A549 (cell line): ENCODE measurements at regions of chr3 and their contacts with region 1.

Region 1: GRCh38 chr3:138915503-138916498 is 31.1 kb downstream of the FOXL2 start:
- DNase-seq: peak; percentile 79 to 82
- ATAC-seq: peak; percentile 94 to 96
- H3K4me3 ChIP-seq: peak overlapping the region; percentile 76
- H3K27ac ChIP-seq: peak overlapping the region; percentile 95 to 97
- H3K4me1 ChIP-seq: peaks cover 5% of the 10 kb centered on the region; the same call in 1 of the 3 replicates
- CTCF ChIP-seq: peak; percentile 70
- EP300 ChIP-seq: no peak
- POLR2A ChIP-seq: peak; percentile 18; the same call in 1 of the 2 replicates
- RAD21 ChIP-seq: peak; percentile 69 to 77

Region 2: GRCh38 chr3:138479438-138479863 is 436.4 kb before region 1 on chr3:
- CTCF ChIA-PET with region 1: interaction called, 13 read pairs
- POLR2A ChIA-PET with region 1: no interaction called
- DNase-seq: peak; percentile 44 to 45
- ATAC-seq: peak; percentile 64 to 81; a peak in 5 of 6 replicates
- H3K4me3 ChIP-seq: no peak overlapping the region
- H3K27ac ChIP-seq: no peak overlapping the region
- H3K4me1 ChIP-seq: no peaks in the 10 kb centered on the region
- CTCF ChIP-seq: peak; percentile 73
- EP300 ChIP-seq: no peak
- POLR2A ChIP-seq: no peak
- RAD21 ChIP-seq: peak; percentile 76

Region 3: DNA sequence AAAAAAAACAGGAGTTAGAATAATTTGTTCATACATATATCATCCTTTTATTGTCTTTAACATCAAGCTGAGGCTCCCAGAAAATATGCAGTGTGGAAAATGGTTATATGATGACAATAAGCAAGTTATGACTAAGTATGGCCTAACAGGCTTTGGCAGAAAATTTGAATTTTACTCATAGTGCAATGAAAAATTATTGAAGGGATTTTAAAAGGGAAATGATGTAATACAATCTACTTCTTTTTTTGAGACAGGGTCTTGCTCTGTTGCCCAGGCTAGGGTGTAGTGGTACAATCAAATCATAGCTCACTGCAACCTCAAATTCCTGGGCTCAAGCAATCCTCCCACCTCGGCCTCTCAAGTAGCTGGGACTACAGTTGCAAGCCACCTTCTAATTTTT is 228.6 kb before region 1 on chr3:
- CTCF ChIA-PET with region 1: interaction called, 143 read pairs
- POLR2A ChIA-PET with region 1: interaction called, 4 read pairs
- DNase-seq: no peak
- ATAC-seq: no peak
- H3K4me3 ChIP-seq: no peak overlapping the region
- H3K27ac ChIP-seq: peak overlapping the region; percentile 19 to 51; a peak in 2 of 6 replicates
- H3K4me1 ChIP-seq: peaks cover 30% of the 10 kb centered on the region
- CTCF ChIP-seq: no peak
- EP300 ChIP-seq: no peak
- POLR2A ChIP-seq: no peak
- RAD21 ChIP-seq: no peak

Region 4: GRCh38 chr3:138768946-138769345 is 146.9 kb before region 1 on chr3:
- CTCF ChIA-PET with region 1: interaction called, 12 read pairs
- POLR2A ChIA-PET with region 1: no interaction called
- DNase-seq: no peak
- ATAC-seq: no peak
- H3K4me3 ChIP-seq: no peak overlapping the region
- H3K27ac ChIP-seq: no peak overlapping the region
- H3K4me1 ChIP-seq: peaks cover 17% of the 10 kb centered on the region
- CTCF ChIP-seq: no peak
- EP300 ChIP-seq: no peak
- POLR2A ChIP-seq: no peak
- RAD21 ChIP-seq: no peak

Region 5: DNA sequence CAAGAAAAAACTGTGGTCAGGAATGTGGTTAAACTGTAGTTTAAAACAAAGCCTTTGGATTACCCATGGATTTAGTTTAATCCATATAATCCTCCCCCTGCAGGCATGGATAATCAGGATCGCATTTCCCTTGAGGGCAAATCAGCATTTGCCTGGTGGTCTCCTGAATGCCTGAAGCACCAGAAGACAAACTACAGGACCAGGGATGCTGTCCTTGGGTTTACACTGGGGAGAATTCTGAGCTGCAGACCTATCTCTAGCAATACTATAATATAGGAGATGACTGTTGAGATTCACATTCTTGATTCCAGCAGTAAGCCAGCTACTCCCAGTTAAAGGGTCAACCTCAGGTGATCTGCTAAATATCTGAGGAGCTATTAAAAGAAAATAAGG is 91.7 kb before region 1 on chr3:
- CTCF ChIA-PET with region 1: interaction called, 15 read pairs
- POLR2A ChIA-PET with region 1: no interaction called
- DNase-seq: no peak
- ATAC-seq: peak in 1 of 2 experiments; percentile 68; a peak in 3 of 6 replicates
- H3K4me3 ChIP-seq: no peak overlapping the region
- H3K27ac ChIP-seq: peak overlapping the region; percentile 54 to 90
- H3K4me1 ChIP-seq: peaks cover 17% of the 10 kb centered on the region
- CTCF ChIP-seq: no peak
- EP300 ChIP-seq: no peak
- POLR2A ChIP-seq: no peak
- RAD21 ChIP-seq: no peak

Region 6: DNA sequence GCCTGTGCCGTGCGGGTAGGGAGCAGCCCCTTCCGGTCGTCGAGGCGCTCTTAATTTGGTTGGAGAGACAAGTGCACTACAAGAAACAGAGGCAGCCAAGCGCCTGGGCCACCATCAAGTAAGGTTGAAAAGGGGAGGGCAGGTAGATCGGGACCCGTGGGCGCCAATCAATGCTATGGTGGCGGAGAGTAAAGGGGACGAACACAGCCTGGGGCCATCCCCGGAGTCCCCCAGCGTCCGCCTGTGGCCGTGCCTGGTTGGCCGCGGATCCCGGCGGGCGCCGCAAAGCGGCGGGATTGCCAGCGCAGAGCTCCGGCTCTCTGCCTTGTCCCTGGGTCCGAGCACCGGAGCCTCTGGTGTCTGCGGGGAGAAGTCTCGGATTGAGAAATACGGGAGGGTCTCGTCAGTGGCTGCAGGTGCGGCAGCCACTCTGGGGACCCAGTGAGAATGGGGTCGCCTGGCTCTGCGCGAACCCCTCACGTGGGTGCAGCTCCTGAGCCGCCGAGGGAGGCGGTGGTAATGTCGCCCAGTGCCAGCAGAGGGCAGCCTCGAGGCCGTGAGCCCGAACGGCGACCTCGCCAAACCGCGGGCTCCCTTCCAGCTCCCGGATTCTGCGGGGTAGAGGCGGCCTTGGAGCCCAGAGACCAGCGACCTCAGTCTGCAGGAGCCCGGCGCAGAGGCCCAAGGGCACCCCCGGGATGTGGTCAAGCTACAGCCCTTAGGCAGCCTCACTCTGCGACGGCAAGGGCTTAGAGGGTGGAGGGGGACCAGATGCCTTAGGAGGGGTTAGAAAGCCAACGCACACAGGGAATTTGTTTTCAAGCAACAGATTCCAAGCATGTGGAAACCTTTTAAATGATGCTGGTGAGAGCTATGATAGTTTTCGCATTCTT is 20.3 kb after region 1 on chr3:
- CTCF ChIA-PET with region 1: interaction called, 82 read pairs
- POLR2A ChIA-PET with region 1: no interaction called
- DNase-seq: peak; percentile 64 to 75
- ATAC-seq: peak; percentile 91
- H3K4me3 ChIP-seq: peak overlapping the region; percentile 45
- H3K27ac ChIP-seq: peak overlapping the region; percentile 69 to 93
- H3K4me1 ChIP-seq: no peaks in the 10 kb centered on the region
- CTCF ChIP-seq: peak; percentile 62
- EP300 ChIP-seq: no peak
- POLR2A ChIP-seq: peak; percentile 15; the same call in 1 of the 2 replicates
- RAD21 ChIP-seq: peak; percentile 45 to 47; a peak in 4 of 5 replicates

Region 7: DNA sequence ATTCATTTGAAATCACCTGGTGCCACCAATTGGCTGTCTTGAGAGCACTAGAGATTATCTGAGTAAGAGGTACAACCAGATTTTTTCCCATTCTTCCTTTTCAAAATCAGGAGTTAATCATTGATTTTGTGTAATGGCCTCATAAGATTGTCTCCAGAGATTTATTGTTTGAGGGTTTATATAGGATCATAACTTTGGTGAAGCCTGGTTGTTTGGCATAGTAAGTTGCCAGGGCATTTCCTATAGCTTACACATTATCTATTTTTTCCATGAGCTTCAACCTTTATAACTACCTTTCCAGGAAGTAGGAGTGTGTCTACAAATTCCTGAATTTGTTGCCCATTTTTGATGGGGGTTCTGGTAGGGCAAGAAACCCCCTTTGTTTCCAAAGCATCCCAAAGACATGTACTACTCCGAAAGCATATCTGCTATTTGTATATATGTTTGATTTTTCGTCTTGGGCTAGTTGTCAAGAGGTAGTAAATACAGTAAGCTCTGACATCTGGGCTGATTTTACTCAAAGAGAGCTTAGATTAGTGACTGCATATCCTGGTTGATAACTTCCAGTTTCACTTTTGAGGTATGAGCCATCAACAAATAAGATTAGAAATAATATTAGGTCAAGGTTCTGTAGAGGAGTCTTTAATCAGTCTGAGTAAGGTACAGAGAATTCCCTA is 116.7 kb after region 1 on chr3:
- CTCF ChIA-PET with region 1: no interaction called
- POLR2A ChIA-PET with region 1: no interaction called
- DNase-seq: no peak
- ATAC-seq: no peak
- H3K4me3 ChIP-seq: no peak overlapping the region
- H3K27ac ChIP-seq: no peak overlapping the region
- H3K4me1 ChIP-seq: no peaks in the 10 kb centered on the region
- CTCF ChIP-seq: no peak
- EP300 ChIP-seq: no peak
- POLR2A ChIP-seq: no peak
- RAD21 ChIP-seq: no peak

Region 8: DNA sequence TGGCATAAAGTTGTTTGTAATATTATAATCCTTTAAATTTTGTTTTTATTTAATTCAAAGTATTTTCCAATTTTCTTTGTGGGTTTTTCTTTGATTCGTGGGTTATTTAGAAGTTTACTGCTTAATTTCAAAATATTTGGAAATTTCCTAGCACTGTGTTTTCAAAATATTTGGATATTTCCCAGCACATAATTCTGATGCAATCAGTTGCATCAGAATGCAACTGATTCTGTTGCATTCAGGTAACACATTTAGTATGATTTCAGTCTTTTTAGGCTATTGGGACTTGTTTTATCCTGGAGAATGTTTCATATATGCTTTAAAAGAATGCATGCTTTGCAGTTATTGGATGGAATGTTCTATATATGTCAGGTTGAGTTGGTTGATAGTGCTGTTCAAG is 147.1 kb after region 1 on chr3:
- CTCF ChIA-PET with region 1: no interaction called
- POLR2A ChIA-PET with region 1: no interaction called
- DNase-seq: no peak
- ATAC-seq: no peak
- H3K4me3 ChIP-seq: no peak overlapping the region
- H3K27ac ChIP-seq: no peak overlapping the region
- H3K4me1 ChIP-seq: no peaks in the 10 kb centered on the region
- CTCF ChIP-seq: no peak
- EP300 ChIP-seq: no peak
- POLR2A ChIP-seq: no peak
- RAD21 ChIP-seq: no peak